HCT116 (cell line): ENCODE measurements at regions of chr11 and their contacts with region 1.

Region 1: DNA sequence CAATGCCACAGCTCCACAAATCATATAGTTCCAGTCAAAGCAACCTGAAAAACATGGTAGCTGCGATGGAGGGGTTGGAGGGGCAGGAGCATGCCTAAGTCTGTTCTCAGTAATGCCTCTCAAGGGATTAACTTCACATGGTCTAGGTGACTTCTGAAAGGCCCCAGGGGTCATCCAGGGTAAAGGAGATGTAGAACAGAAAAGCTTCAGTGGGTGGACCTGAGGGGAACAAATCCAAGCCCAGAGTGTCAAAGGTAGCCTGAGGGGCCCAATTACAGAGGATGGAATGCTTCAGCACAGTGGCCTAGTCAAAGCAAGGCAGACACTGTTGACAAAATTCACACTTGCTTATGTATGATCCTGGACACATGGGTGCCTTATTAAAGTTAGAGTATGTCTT is 23.3 kb downstream of the OR4D9 start:
- DNase-seq: no peak
- ATAC-seq: no peak
- H3K4me3 ChIP-seq: no peak overlapping the region
- H3K27ac ChIP-seq: no peak overlapping the region
- H3K4me1 ChIP-seq: peaks cover 7 to 14% of the 10 kb centered on the region in 2 experiments
- H3K27me3 ChIP-seq: no peaks in the 10 kb centered on the region
- CTCF ChIP-seq: no peak
- POLR2A ChIP-seq: no peak
- RAD21 ChIP-seq: no peak

Region 2: GRCh38 chr11:59615637-59616395 is 81.1 kb after region 1 on chr11 and contains the start of gene OSBP:
- CTCF ChIA-PET with region 1: interaction called, 3 read pairs
- POLR2A ChIA-PET with region 1: interaction called, 3 read pairs
- RAD21 ChIA-PET with region 1: no interaction called
- intact Hi-C with region 1: loop called (anchors 5 kb)
- DNase-seq: peak; percentile 100
- ATAC-seq: peak; percentile 89
- H3K4me3 ChIP-seq: peak within 1 kb of the TSS; percentile 91 to 95
- H3K27ac ChIP-seq: peak within 1 kb of the TSS; percentile 81
- H3K4me1 ChIP-seq: peaks cover 16 to 35% of the 10 kb centered on the region in 2 experiments
- H3K27me3 ChIP-seq: no peaks in the 10 kb centered on the region
- CTCF ChIP-seq: no peak
- POLR2A ChIP-seq: no peak
- RAD21 ChIP-seq: no peak
- total RNA-seq, gene OSBP: 43.8 TPM